Naive thymus-derived CD8-positive, alpha-beta T cell (primary cell): ENCODE measurements at regions of chr5 and their contacts with region 1.

Region 1: DNA sequence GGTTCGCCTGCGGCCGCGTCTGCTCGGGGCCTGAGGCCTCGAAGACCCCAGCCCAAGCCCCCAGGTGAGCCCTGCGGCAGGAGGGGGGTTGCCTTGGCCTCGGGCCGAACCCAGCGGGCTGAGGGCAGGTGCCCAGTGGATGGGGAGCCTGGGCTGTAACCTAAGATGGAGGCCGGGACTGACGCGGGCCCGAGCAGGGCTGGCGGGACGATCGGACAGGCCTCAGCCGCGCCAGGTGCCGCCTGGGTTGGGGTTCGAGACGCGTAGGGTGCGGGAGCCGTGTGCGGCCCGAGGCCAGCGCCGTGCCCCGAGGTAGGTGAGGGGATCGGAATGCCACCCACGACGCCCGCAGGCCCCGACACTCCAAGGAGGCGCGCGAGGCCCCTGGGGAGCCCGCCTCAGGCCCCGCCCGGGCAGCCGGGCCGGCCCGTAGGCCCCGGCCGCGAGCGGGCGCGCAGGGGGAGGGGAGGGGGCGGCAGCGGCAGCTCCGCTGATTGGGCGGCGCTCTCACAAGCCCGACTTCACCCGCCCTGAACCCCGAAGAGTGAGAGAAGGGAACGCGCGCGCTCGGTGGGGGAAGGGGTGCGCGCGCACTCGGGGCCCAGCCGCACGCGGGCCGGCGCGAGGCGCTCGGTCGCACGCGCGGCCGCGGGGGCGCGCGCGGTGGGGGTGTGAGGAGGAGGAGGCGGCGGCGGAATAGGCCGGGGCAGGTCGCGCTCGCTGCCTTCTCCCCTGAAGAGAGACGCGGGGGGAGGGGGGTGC is at the start of gene NSD1:
- DNase-seq: peak; percentile 80 to 93 (median 88)
- ATAC-seq: peak; percentile 63 to 73
- H3K4me3 Mint-ChIP-seq: peak within 1 kb of the TSS; percentile 79 to 90 (median 86)
- H3K27ac Mint-ChIP-seq: peak within 1 kb of the TSS; percentile 37 to 95 (median 89)
- H3K4me1 Mint-ChIP-seq: peaks cover 28 to 67% (median 60%) of the 10 kb centered on the region in 4 donors
- H3K27me3 Mint-ChIP-seq: no peaks in the 10 kb centered on the region
- polyA plus RNA-seq, gene NSD1: 25.0 to 43.1 (median 42.7) TPM

Region 2: DNA sequence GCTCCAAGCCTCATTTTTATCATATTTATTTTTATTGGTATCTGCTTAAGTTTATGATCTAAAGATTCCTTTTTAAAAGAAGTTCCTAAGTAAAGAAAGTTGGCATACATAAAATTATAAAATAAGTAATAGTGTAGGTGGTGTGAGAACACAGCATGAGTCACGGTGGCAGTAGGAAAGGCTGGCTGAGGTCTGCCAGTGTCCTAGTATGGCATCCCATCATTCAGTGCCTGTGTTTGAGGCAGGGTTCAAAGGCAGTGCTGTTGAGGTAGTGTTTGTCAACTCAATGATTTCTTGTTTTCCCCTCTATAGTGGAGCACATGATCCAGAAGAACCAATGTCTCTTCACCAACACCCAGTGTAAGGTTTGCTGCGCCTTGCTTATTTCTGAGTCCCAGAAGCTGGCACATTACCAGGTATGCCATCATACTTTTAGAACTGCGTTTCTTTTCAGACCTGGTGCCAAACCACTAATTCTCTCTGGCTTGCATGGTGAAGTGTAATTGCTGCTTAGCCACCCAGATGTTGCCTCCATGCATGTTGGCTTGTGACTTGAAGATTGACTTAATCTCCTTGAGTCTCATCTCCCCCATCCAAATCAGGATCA is 92.4 kb before region 1 on chr5:
- POLR2A ChIA-PET with region 1: no interaction called
- DNase-seq: no peak
- ATAC-seq: no peak
- H3K4me3 Mint-ChIP-seq: no peak overlapping the region
- H3K27ac Mint-ChIP-seq: peak overlapping the region in 2 of 10 donors; percentile 4 to 27
- H3K4me1 Mint-ChIP-seq: peaks cover 6 to 11% (median 9%) of the 10 kb centered on the region in 4 donors
- H3K27me3 Mint-ChIP-seq: no peaks in the 10 kb centered on the region

Region 3: GRCh38 chr5:177113566-177114424 is 19.5 kb before region 1 on chr5:
- POLR2A ChIA-PET with region 1: interaction called, 43 read pairs
- DNase-seq: peak; percentile 59 to 89 (median 76)
- ATAC-seq: peak; percentile 31 to 49
- H3K4me3 Mint-ChIP-seq: peak overlapping the region in 3 of 10 donors; percentile 2 to 56 (median 4)
- H3K27ac Mint-ChIP-seq: peak overlapping the region in 4 of 10 donors; percentile 10 to 65 (median 44)
- H3K4me1 Mint-ChIP-seq: peaks cover 7 to 34% (median 20%) of the 10 kb centered on the region in 4 donors
- H3K27me3 Mint-ChIP-seq: no peaks in the 10 kb centered on the region